Caco-2 (cell line): ENCODE measurements at regions of chr9 and their contacts with region 1.

Region 1: GRCh38 chr9:19174127-19174912 is 47.0 kb upstream of the PLIN2 start:
- DNase-seq: peak; percentile 59 to 68
- H3K4me3 ChIP-seq: no peak overlapping the region
- H3K4me3 Mint-ChIP-seq: no peak overlapping the region
- H3K27ac Mint-ChIP-seq: peak overlapping the region; percentile 23
- H3K4me1 ChIP-seq: peaks cover 14% of the 10 kb centered on the region
- H3K4me1 Mint-ChIP-seq: peaks cover 13% of the 10 kb centered on the region
- H3K27me3 ChIP-seq: no peaks in the 10 kb centered on the region
- H3K27me3 Mint-ChIP-seq: no peaks in the 10 kb centered on the region
- CTCF ChIP-seq: peak; percentile 34 to 37

Region 2: GRCh38 chr9:19048966-19049916 is 125.1 kb before region 1 on chr9 and contains the start of gene RRAGA:
- CTCF ChIA-PET with region 1: interaction called, 26 read pairs
- POLR2A ChIA-PET with region 1: interaction called, 5 read pairs
- intact Hi-C with region 1: loop called (anchors 1 kb)
- DNase-seq: peak; percentile 96 to 97
- H3K4me3 ChIP-seq: peak within 1 kb of the TSS; percentile 77
- H3K4me3 Mint-ChIP-seq: peak within 1 kb of the TSS; percentile 85
- H3K27ac Mint-ChIP-seq: peak within 1 kb of the TSS; percentile 93
- H3K4me1 ChIP-seq: peaks cover 7% of the 10 kb centered on the region; the same call in 1 of the 2 replicates
- H3K4me1 Mint-ChIP-seq: no peaks in the 10 kb centered on the region
- H3K27me3 ChIP-seq: no peaks in the 10 kb centered on the region
- H3K27me3 Mint-ChIP-seq: no peaks in the 10 kb centered on the region
- CTCF ChIP-seq: peak; percentile 70
- total RNA-seq, gene RRAGA: 37.8 and 44.7 TPM in 2 replicates

Region 3: GRCh38 chr9:19074836-19075235 is 99.5 kb before region 1 on chr9:
- CTCF ChIA-PET with region 1: no interaction called
- POLR2A ChIA-PET with region 1: no interaction called
- intact Hi-C with region 1: no loop called
- DNase-seq: no peak
- H3K4me3 ChIP-seq: no peak overlapping the region
- H3K4me3 Mint-ChIP-seq: no peak overlapping the region
- H3K27ac Mint-ChIP-seq: no peak overlapping the region
- H3K4me1 ChIP-seq: no peaks in the 10 kb centered on the region
- H3K4me1 Mint-ChIP-seq: no peaks in the 10 kb centered on the region
- H3K27me3 ChIP-seq: no peaks in the 10 kb centered on the region
- H3K27me3 Mint-ChIP-seq: no peaks in the 10 kb centered on the region
- CTCF ChIP-seq: no peak

Region 4: GRCh38 chr9:19085295-19085694 is 89.0 kb before region 1 on chr9:
- CTCF ChIA-PET with region 1: interaction called, 3 read pairs
- POLR2A ChIA-PET with region 1: interaction called, 4 read pairs
- intact Hi-C with region 1: loop called (anchors 1 kb)
- DNase-seq: peak in 1 of 2 experiments; percentile 13
- H3K4me3 ChIP-seq: no peak overlapping the region
- H3K4me3 Mint-ChIP-seq: no peak overlapping the region
- H3K27ac Mint-ChIP-seq: no peak overlapping the region
- H3K4me1 ChIP-seq: no peaks in the 10 kb centered on the region
- H3K4me1 Mint-ChIP-seq: no peaks in the 10 kb centered on the region
- H3K27me3 ChIP-seq: no peaks in the 10 kb centered on the region
- H3K27me3 Mint-ChIP-seq: no peaks in the 10 kb centered on the region
- CTCF ChIP-seq: peak in 1 of 2 experiments; percentile 39

Region 5: GRCh38 chr9:19102631-19103345 is 71.5 kb before region 1 on chr9 and contains the start of gene HAUS6:
- CTCF ChIA-PET with region 1: no interaction called
- POLR2A ChIA-PET with region 1: no interaction called
- intact Hi-C with region 1: loop called (anchors 1 kb)
- DNase-seq: peak; percentile 91 to 95
- H3K4me3 ChIP-seq: peak within 1 kb of the TSS; percentile 75
- H3K4me3 Mint-ChIP-seq: peak within 1 kb of the TSS; percentile 86
- H3K27ac Mint-ChIP-seq: peak within 1 kb of the TSS; percentile 79
- H3K4me1 ChIP-seq: no peaks in the 10 kb centered on the region
- H3K4me1 Mint-ChIP-seq: peaks cover 7% of the 10 kb centered on the region
- H3K27me3 ChIP-seq: no peaks in the 10 kb centered on the region
- H3K27me3 Mint-ChIP-seq: no peaks in the 10 kb centered on the region
- CTCF ChIP-seq: peak in 1 of 2 experiments; percentile 29
- total RNA-seq, gene HAUS6: 15.0 and 15.2 TPM in 2 replicates

Region 6: DNA sequence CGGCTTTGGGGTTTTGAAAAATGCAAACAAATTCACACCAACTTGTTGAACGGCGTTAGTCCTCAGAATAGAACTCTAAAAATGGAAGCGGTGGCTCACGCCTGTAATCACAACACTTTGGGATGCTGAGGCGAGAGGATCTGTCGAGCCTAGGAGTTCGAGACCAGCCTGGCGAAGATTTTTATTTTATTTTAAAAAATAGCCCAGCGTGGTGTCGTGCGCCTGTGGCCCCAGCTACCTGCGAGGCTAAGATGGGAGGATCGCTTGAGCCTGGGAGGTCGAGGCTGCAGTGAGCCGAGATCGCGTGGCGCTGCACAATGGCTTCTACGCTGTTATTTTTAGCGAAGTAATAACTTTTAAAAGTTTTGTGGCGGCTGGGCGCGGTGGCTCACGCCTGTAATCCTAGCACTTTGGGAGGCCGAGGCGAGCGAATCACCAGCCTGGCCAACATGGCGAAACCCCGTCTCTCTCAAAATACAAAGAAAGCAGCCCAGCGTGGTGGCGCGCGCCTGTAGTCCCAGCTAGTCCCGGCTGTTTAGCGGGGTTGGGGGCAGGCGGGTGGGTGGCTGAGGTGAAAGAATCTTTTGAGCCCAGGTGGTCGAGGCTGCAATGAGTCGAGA is 46.3 kb before region 1 on chr9:
- CTCF ChIA-PET with region 1: interaction called, 6 read pairs
- POLR2A ChIA-PET with region 1: no interaction called
- intact Hi-C with region 1: loop called (anchors 1 kb)
- DNase-seq: peak; percentile 38
- H3K4me3 ChIP-seq: peak overlapping the region; percentile 53
- H3K4me3 Mint-ChIP-seq: peak overlapping the region; percentile 79
- H3K27ac Mint-ChIP-seq: peak overlapping the region; percentile 85
- H3K4me1 ChIP-seq: peaks cover 15% of the 10 kb centered on the region
- H3K4me1 Mint-ChIP-seq: peaks cover 8% of the 10 kb centered on the region
- H3K27me3 ChIP-seq: no peaks in the 10 kb centered on the region
- H3K27me3 Mint-ChIP-seq: no peaks in the 10 kb centered on the region
- CTCF ChIP-seq: no peak

Region 7: GRCh38 chr9:19193029-19193324 is 18.7 kb after region 1 on chr9:
- CTCF ChIA-PET with region 1: no interaction called
- POLR2A ChIA-PET with region 1: no interaction called
- intact Hi-C with region 1: no loop called
- DNase-seq: peak; percentile 56 to 74
- H3K4me3 ChIP-seq: no peak overlapping the region
- H3K4me3 Mint-ChIP-seq: no peak overlapping the region
- H3K27ac Mint-ChIP-seq: peak overlapping the region; percentile 90
- H3K4me1 ChIP-seq: peaks cover 41% of the 10 kb centered on the region
- H3K4me1 Mint-ChIP-seq: peaks cover 28% of the 10 kb centered on the region
- H3K27me3 ChIP-seq: no peaks in the 10 kb centered on the region
- H3K27me3 Mint-ChIP-seq: no peaks in the 10 kb centered on the region
- CTCF ChIP-seq: no peak

Region 8: DNA sequence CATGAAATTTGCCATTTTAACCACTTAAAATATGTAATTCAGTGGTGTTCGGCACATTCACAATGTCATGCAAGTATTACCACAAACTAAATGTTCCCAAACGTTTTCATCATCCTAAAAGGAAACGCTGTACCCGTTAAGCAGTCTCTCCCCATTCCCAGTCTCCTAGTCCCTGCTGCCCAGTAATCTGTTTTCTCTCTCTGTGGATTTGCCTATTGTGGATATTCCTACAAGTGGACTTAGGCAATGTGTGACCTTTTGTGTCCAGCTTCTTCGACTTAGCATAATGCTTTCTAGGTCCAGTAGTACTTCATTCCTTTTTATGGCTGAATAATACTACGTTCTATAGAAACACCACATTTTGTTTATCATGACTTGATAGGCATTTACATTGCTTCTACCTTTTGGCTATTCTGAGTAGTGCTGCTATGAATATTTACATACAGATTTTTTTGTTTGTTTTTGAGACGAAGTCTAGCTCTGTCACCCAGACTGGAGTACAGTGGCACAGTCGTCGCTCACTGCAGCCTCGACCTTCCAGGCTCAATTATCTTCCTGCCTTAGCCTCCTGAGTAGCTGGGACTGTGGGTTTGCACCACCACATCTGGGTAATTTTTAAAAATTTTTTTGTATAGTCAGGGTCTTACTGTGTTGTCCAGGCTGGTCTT is 69.2 kb after region 1 on chr9:
- CTCF ChIA-PET with region 1: no interaction called
- POLR2A ChIA-PET with region 1: no interaction called
- intact Hi-C with region 1: no loop called
- DNase-seq: no peak
- H3K4me3 ChIP-seq: no peak overlapping the region
- H3K4me3 Mint-ChIP-seq: no peak overlapping the region
- H3K27ac Mint-ChIP-seq: no peak overlapping the region
- H3K4me1 ChIP-seq: peaks cover 13% of the 10 kb centered on the region; the same call in 1 of the 2 replicates
- H3K4me1 Mint-ChIP-seq: peaks cover 46% of the 10 kb centered on the region
- H3K27me3 ChIP-seq: no peaks in the 10 kb centered on the region
- H3K27me3 Mint-ChIP-seq: no peaks in the 10 kb centered on the region
- CTCF ChIP-seq: no peak